Activated B cell treated with CpG ODN at 0.5 μM for 24 hours (primary cell): ENCODE measurements at regions of chr2 and their contacts with region 1.

Region 1: DNA sequence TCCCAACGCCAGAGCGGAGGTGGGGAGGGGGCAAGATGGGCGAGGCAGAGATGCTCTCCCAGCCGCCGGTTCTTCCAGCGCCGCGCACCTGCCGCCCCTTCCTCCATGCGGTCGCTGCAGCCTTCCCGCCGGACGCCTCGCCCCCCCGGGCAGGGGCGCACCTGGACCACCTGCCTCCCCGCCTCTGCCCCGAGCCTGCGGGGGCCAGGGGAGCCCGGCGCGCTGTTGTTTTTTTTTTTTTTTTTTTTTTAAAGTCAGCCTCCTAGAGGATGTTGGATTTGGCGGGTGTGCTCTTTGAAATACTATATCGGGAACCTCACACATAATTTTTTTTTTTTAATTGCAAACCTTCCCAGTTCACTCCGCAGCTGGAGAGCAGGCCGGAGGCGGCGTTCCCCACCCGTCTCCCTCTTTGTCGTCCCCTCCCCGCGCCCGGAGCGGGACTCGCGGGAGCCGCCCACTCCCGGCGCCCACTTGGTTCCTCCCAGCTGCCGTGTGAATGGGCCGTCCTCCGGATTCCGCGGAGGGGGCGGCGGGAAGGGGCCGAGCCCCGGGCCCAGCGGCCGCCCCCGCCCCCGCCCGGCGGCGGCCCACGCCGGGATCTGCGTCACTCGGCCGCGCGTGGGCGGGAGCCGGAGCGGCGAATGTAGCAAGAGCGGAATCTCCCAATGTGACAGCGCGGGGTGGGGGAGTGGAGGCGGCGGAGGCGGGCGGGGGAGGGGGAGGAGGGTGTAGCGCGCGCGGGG is 421 bp upstream of the NAB1 start:
- DNase-seq: peak; percentile 91
- ATAC-seq: peak; percentile 77
- H3K4me3 Mint-ChIP-seq: peak overlapping the region; percentile 83
- H3K27ac Mint-ChIP-seq: peak overlapping the region; percentile 79
- H3K4me1 Mint-ChIP-seq: peaks cover 22% of the 10 kb centered on the region
- H3K27me3 Mint-ChIP-seq: no peaks in the 10 kb centered on the region
- CTCF ChIP-seq: no peak

Region 2: GRCh38 chr2:189762551-189763298 is 885.7 kb before region 1 on chr2 and contains the start of gene OSGEPL1:
- CTCF ChIA-PET with region 1: no interaction called
- POLR2A ChIA-PET with region 1: interaction called, 3 read pairs
- intact Hi-C with region 1: loop called (anchors 5 kb)
- DNase-seq: peak; percentile 81
- ATAC-seq: peak; percentile 93
- H3K4me3 Mint-ChIP-seq: peak within 1 kb of the TSS; percentile 95
- H3K27ac Mint-ChIP-seq: peak within 1 kb of the TSS; percentile 97
- H3K4me1 Mint-ChIP-seq: peaks cover 8% of the 10 kb centered on the region
- H3K27me3 Mint-ChIP-seq: no peaks in the 10 kb centered on the region
- CTCF ChIP-seq: no peak
- total RNA-seq, gene OSGEPL1: 10.6 and 12.3 TPM in 2 replicates

Region 3: DNA sequence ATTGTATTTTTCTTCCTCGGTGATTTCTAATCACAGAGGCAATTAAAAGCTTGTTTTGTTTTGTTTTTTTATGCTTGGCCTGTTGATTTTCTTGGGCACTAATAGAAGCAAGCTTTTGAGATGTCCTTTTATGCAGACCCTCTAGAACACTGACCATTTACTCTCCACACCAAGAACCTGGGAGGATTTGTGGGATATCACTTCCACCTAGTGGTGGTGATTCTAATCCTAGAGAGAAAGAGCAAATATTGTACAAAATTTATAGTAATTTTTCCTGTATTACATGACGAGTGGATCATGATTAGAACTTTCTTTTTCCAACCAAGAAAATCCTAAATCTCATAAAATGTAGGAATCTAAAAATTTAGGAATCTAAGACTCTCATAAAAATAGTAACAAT is 137.4 kb before region 1 on chr2:
- CTCF ChIA-PET with region 1: no interaction called
- POLR2A ChIA-PET with region 1: no interaction called
- intact Hi-C with region 1: loop called (anchors 5 kb)
- DNase-seq: no peak
- ATAC-seq: no peak
- H3K4me3 Mint-ChIP-seq: no peak overlapping the region
- H3K27ac Mint-ChIP-seq: no peak overlapping the region
- H3K4me1 Mint-ChIP-seq: peaks cover 19% of the 10 kb centered on the region
- H3K27me3 Mint-ChIP-seq: no peaks in the 10 kb centered on the region
- CTCF ChIP-seq: no peak

Region 4: GRCh38 chr2:190627448-190628412 is 20.7 kb before region 1 on chr2:
- CTCF ChIA-PET with region 1: interaction called, 3 read pairs
- POLR2A ChIA-PET with region 1: interaction called, 10 read pairs
- intact Hi-C with region 1: loop called (anchors 2 kb)
- DNase-seq: no peak
- ATAC-seq: peak; percentile 70
- H3K4me3 Mint-ChIP-seq: peak overlapping the region; percentile 87
- H3K27ac Mint-ChIP-seq: peak overlapping the region; percentile 42
- H3K4me1 Mint-ChIP-seq: peaks cover 8% of the 10 kb centered on the region
- H3K27me3 Mint-ChIP-seq: peaks cover 6% of the 10 kb centered on the region
- CTCF ChIP-seq: no peak

Region 5: GRCh38 chr2:190718652-190719526 is 70.4 kb after region 1 on chr2:
- CTCF ChIA-PET with region 1: no interaction called
- POLR2A ChIA-PET with region 1: no interaction called
- intact Hi-C with region 1: loop called (anchors 2 kb)
- DNase-seq: no peak
- ATAC-seq: peak; percentile 89
- H3K4me3 Mint-ChIP-seq: no peak overlapping the region
- H3K27ac Mint-ChIP-seq: peak overlapping the region; percentile 61
- H3K4me1 Mint-ChIP-seq: peaks cover 14% of the 10 kb centered on the region
- H3K27me3 Mint-ChIP-seq: no peaks in the 10 kb centered on the region
- CTCF ChIP-seq: no peak

Region 6: DNA sequence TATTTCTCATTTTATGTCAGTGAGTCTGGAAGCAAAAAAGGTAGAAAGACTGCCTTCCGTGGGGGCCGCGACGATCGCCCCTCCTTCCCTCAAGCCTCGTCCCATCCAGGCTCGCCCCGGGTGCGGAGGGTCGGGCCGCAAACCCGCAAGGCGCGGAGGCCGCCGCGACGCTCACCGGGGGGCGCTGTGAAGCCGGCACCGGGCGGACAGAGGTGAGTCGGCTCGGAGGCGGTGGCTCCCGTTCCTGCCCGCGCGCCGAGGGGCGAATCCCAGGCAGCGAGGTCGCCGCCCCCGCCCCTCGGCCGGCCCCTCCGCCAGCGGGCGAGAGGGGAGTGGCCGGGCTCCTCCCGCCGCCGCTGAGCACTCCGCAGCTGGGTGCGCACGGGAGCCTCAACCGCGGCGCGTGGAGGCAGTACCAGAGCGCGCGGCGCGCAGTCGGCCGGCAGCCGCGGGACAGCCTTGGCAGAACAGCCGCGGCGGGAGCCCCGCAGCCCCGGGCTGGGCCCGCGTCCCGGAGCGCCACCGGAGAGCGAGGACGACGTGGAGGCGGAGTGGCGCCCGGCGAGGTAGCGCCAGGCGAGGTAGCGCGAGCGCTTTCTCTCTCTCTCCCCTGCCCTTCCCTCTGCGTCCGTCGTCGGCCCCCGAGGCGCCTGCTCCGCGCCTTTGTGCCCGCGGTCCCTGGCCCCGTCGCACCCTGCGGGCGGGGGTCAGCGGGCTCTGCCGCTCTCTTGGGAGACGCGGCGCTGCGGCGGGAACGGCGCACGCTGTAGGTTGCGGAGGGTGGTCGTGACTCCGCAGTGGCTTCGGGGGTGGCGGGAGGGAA is 596.8 kb after region 1 on chr2 and contains the start of gene MYO1B:
- CTCF ChIA-PET with region 1: no interaction called
- POLR2A ChIA-PET with region 1: interaction called, 10 read pairs
- intact Hi-C with region 1: no loop called
- DNase-seq: peak; percentile 58
- ATAC-seq: peak; percentile 77
- H3K4me3 Mint-ChIP-seq: peak within 1 kb of the TSS; percentile 77
- H3K27ac Mint-ChIP-seq: no peak within 1 kb of the TSS
- H3K4me1 Mint-ChIP-seq: peaks cover 16% of the 10 kb centered on the region
- H3K27me3 Mint-ChIP-seq: peaks cover 4% of the 10 kb centered on the region
- CTCF ChIP-seq: no peak
- total RNA-seq, gene MYO1B: 2.5 and 2.7 TPM in 2 replicates